ENCODE measurements at regions of chr10 and their contacts with region 1.

Region 1: GRCh38 chr10:126387023-126387921 is 1.0 kb downstream of the ADAM12 start:
- DNase-seq: peak; percentile 75 to 87 (median 81)
- H3K4me3 ChIP-seq: peak overlapping the region; percentile 36
- H3K27ac ChIP-seq: peak overlapping the region; percentile 19 to 66
- H3K4me1 ChIP-seq: peaks cover 5% of the 10 kb centered on the region
- H3K27me3 ChIP-seq: no peaks in the 10 kb centered on the region
- CTCF ChIP-seq: peak; percentile 67 to 80 (median 75)
- EP300 ChIP-seq: no peak
- POLR2A ChIP-seq: no peak

Region 2: GRCh38 chr10:126133906-126134656 is 253.2 kb before region 1 on chr10:
- intact Hi-C with region 1: loop called in 1 of 4 experiments (anchors 10 kb)
- DNase-seq: no peak
- H3K4me3 ChIP-seq: no peak overlapping the region
- H3K27ac ChIP-seq: no peak overlapping the region
- H3K4me1 ChIP-seq: peaks cover 12% of the 10 kb centered on the region
- H3K27me3 ChIP-seq: no peaks in the 10 kb centered on the region
- CTCF ChIP-seq: no peak
- EP300 ChIP-seq: no peak
- POLR2A ChIP-seq: no peak

Region 3: DNA sequence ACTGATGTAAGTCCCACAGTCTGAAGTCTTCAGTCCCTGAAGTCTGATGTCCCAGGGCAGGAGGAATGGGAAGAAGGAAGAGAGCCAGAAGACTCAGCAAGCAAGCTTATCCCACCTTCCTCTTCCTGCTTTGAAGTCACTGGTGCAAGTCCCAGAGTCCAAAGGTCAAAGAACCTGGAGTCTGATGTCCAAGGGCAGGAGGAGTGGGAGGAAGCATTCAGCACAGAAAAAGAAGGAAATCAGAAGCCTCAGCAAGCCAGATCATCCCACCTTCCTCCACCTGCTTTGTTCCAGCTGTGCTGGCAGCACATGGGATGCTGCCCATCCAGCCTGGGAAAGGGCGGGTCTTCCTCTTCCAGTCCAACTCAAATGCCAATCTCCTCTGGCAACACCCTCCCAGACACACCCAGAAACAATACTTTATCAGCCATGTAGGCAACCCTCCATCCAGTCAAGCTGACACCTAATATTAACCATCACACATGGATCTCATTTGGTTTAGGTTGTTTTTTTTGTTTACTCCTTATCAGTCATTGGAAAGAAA is 49.9 kb before region 1 on chr10:
- intact Hi-C with region 1: no loop called
- DNase-seq: no peak
- H3K4me3 ChIP-seq: no peak overlapping the region
- H3K27ac ChIP-seq: no peak overlapping the region
- H3K4me1 ChIP-seq: peaks cover 2% of the 10 kb centered on the region
- H3K27me3 ChIP-seq: no peaks in the 10 kb centered on the region
- CTCF ChIP-seq: no peak
- EP300 ChIP-seq: no peak
- POLR2A ChIP-seq: no peak

Region 4: DNA sequence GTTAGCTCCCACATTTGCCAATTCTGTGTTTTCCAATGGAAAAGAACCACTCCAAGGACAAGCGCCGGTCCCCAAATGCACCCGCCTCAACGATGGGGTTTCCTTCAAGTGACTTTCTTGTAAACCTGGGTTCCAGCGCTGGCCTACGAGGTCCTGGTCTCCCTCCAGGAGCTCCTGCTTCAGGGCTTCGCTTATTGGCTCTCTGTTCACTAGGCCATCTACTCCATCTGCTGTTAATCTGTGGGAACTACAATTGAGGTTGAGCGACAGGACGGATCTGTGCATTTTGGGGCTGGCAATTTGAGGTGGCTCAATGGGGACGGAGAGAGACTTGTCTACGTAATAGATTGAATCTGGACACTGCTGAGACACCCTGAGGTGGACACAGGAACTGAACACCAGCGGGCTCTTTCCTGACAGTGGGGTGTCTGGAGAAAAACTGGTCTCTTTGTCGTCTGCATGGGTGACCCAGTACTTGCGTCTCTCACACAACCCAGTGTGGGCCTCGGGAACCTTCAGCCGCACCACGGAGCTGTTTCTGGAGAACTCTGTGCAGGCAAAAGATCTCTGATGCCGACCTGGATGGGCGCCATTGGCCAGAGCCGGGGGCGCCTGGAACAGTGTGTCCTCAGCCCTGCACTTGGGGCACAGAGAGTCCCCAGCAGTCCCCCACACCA is 116.9 kb after region 1 on chr10:
- intact Hi-C with region 1: loop called in 1 of 4 experiments (anchors 10 kb)
- DNase-seq: peak; percentile 34 to 51 (median 40)
- H3K4me3 ChIP-seq: no peak overlapping the region
- H3K27ac ChIP-seq: no peak overlapping the region
- H3K4me1 ChIP-seq: no peaks in the 10 kb centered on the region
- H3K27me3 ChIP-seq: no peaks in the 10 kb centered on the region
- CTCF ChIP-seq: peak; percentile 44 to 68 (median 58)
- EP300 ChIP-seq: no peak
- POLR2A ChIP-seq: no peak